HEK293T (cell line): ENCODE measurements at regions of chr2 and their contacts with region 1.

Region 1: GRCh38 chr2:206159346-206160124 is at the starts of genes EEF1B2 and NDUFS1:
- DNase-seq: peak; percentile 97

Region 2: GRCh38 chr2:205748639-205749477 is 410.7 kb before region 1 on chr2:
- CTCF ChIA-PET with region 1: no interaction called
- POLR2A ChIA-PET with region 1: no interaction called
- DNase-seq: no peak

Region 3: GRCh38 chr2:205984381-205984780 is 175.2 kb before region 1 on chr2:
- CTCF ChIA-PET with region 1: no interaction called
- POLR2A ChIA-PET with region 1: no interaction called
- DNase-seq: no peak

Region 4: GRCh38 chr2:206023183-206023582 is 136.4 kb before region 1 on chr2:
- CTCF ChIA-PET with region 1: no interaction called
- POLR2A ChIA-PET with region 1: no interaction called
- DNase-seq: no peak

Region 5: GRCh38 chr2:206212673-206213513 is 53.4 kb after region 1 on chr2:
- CTCF ChIA-PET with region 1: no interaction called
- POLR2A ChIA-PET with region 1: interaction called, 10 read pairs
- DNase-seq: no peak

Region 6: GRCh38 chr2:206260188-206261012 is 100.9 kb after region 1 on chr2:
- CTCF ChIA-PET with region 1: no interaction called
- POLR2A ChIA-PET with region 1: no interaction called
- DNase-seq: peak; percentile 56